Adrenal gland (tissue), 19 donors: ENCODE measurements at regions of chr2 and their contacts with region 1.

Region 1: DNA sequence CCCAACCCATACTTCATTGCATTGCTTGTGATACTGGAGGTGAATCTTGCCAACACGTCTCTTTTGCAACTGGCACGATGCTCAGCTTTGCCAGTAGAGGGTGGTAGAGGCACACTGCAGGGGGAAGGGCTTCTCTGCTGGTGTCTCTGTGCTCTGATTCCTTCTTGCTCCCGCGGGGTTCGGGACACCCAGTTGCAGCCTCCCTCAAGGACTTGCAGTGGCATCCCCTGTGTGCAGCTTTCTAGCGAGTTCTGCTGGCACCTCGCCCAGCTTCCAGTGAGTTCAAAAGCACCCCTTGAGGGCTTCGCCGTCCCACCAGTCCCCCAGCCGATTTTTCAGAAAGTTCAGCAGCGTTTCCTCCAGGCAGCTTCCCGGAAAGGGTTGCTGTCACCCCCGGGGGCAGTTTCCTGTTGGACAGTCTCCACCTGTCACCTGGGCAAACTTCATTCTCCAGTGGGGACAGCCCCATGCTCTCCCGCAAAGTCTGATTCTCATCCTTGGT is 35.3 kb upstream of the EN1 start:
- DNase-seq: peak; percentile 51 to 72 (median 64)
- H3K4me3 ChIP-seq: peak overlapping the region in 1 of 4 donors; percentile 37
- H3K27ac ChIP-seq: no peak overlapping the region
- H3K4me1 ChIP-seq: no peaks in the 10 kb centered on the region
- H3K27me3 ChIP-seq: peaks cover 12% of the 10 kb centered on the region
- CTCF ChIP-seq: peak; percentile 64 to 87 (median 77)
- POLR2A ChIP-seq: no peak

Region 2: DNA sequence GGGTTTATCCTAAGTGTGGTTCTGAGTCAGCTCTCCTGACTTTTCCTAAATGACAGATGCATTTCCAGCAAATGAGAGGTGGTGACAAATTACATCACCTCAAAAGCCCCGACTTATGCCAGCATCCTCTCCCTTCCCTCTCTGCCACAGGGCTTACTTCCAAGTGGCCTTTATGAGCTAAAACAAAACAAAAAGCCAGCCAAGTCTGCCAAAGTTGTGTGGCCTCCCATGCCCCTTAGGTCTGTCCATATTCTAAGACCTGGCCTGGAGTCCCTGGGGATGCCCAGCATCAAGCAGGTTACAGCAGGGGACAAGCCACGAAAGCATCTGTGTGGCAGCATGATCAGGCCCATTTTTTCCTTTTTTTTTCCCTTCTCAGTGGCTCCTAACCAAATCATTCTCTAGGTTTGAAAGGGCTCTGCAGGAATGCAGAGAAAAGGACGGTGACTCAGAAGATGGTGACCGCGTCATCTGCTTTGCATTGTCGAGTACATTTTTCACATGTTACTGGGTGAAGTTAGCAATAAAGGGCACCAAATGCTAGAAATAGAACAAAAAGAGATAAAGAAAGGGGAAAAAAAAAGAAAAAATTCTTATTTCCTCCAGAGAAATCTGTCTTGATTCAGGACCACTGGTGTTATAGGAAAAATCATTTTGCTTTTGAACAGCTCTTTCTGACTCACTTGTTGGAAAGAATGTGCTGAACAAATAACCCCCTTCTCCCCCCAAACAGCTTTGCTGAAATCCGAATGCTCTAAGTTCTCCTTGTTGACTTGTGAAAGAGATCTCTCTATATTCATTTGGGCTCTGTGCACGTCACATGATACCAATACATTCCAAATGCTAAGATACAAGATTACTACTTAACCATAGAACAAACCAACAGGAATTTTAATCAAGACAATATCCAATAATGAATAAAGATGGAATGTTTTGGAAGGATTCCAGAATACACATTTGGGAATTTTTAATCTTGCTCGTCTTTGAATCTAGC is 214.0 kb before region 1 on chr2:
- intact Hi-C with region 1: no loop called
- DNase-seq: no peak
- H3K4me3 ChIP-seq: no peak overlapping the region
- H3K27ac ChIP-seq: peak overlapping the region in 2 of 5 donors; percentile 36 to 41
- H3K4me1 ChIP-seq: no peaks in the 10 kb centered on the region
- H3K27me3 ChIP-seq: no peaks in the 10 kb centered on the region
- CTCF ChIP-seq: no peak
- POLR2A ChIP-seq: no peak

Region 3: DNA sequence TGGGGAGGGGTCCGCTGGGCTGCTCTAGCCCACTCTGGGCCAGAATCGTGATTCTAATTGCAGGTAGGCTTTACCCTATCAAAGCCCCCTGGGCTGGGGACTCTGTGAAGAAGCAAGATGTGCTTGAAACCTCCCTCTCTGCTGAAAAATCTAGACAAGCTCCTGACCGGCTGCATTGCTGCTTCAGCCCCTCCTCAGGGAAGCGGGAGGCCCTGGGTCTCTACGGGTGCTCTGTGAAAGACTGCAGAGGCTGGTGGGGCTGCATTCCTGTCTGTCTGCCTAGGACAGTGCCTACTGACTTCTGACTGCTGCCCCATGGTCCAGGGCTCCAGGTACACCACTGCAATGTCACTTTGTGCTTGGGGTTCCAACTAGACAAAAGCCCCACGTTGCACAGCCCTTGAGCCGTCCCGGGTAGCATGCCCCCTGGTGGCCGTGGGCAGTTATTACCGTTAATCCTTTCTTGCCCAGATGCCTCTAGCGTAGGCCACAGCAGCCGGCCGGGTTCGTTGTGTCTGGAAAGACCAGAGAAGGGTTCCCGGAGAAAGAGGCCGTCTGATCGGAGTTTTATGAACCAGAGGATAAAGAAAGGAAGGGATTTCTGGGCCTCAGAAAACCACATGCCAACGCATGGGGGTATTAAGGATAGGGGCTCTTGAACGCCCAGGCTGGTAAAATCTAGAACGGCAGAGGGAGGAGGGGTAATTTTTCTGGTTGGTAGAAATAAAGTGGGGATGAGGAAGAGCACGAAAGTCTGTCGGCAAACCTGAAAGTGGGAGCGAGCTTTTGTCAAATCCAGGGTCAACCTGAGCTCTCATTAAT is 291.7 kb after region 1 on chr2:
- intact Hi-C with region 1: loop called in 1 of 2 experiments (anchors 10 kb)
- DNase-seq: peak; percentile 27 to 62 (median 45)
- H3K4me3 ChIP-seq: no peak overlapping the region
- H3K27ac ChIP-seq: no peak overlapping the region
- H3K4me1 ChIP-seq: no peaks in the 10 kb centered on the region
- H3K27me3 ChIP-seq: no peaks in the 10 kb centered on the region
- CTCF ChIP-seq: peak; percentile 48 to 71 (median 64)
- POLR2A ChIP-seq: no peak

Region 4: GRCh38 chr2:119289093-119289492 is 406.3 kb after region 1 on chr2:
- intact Hi-C with region 1: loop called in 1 of 2 experiments (anchors 5 kb)
- DNase-seq: no peak
- H3K4me3 ChIP-seq: no peak overlapping the region
- H3K27ac ChIP-seq: no peak overlapping the region
- H3K4me1 ChIP-seq: peaks cover 0 to 15% of the 10 kb centered on the region in 2 donors
- H3K27me3 ChIP-seq: no peaks in the 10 kb centered on the region
- CTCF ChIP-seq: no peak
- POLR2A ChIP-seq: no peak